PC-3 (cell line): ENCODE measurements at regions of chr1 and their contacts with region 1.

Region 1: DNA sequence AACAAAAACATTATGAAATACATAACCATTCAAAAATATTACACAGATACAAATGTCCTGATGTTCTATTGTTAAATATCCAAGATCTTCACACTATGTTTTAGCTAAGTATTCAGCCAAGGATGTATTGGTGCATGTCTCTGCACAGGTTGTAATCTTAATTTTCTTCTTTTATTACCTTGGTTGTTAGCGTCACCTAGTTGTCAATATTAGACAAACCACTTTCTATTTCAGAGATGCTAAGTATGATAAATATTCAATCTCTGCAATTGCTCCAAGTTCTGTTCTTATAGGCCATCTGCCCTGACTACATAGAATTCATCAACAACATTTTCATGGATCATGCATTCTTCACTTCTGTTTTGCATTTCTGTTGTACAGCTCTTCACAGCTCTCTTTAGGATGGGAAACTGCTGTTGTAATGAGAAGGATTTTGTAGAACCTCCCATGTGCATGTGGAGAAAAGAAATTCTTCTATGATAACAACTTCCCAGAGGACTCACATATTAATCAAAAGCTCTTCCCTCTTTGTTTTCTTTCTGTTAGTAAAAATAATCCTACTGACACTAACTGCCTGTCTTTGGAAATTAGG is 380.1 kb downstream of the NUF2 start:
- DNase-seq: peak; percentile 29
- ATAC-seq: no peak
- H3K4me3 ChIP-seq: no peak overlapping the region
- H3K27ac ChIP-seq: no peak overlapping the region
- H3K4me1 ChIP-seq: peaks cover 12% of the 10 kb centered on the region; the same call in 1 of the 2 replicates
- H3K27me3 ChIP-seq: no peaks in the 10 kb centered on the region
- CTCF ChIP-seq: peak; percentile 48

Region 2: DNA sequence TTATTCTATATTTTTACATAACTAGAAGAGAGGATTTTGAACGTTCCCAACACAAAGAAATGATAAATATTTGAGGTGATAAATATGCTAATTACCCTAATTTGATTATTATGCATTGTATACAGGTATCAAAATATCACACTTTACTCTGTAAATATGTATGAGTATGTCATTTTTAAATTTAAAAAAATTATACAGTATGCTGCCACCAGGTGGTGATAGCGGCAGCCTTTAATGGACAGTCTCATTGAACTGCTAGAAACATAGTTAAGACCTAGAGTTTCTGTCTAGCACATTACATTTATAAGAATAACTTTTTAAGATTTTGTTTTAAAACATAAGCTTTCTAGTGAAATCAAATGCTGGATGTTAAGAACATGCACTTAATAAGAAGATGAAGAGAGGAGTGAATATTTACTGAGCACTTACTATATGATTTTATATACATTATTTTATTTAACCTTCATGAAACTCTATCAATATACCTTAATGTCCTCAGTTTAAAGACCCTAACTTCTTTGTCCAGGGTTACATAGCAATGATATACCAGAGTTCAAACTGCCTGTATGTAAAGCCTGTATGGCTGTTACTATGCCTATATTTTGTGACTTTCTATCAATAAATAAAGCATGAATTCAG is 173.1 kb before region 1 on chr1:
- CTCF ChIA-PET with region 1: no interaction called
- POLR2A ChIA-PET with region 1: no interaction called
- intact Hi-C with region 1: loop called (anchors 2 kb)
- DNase-seq: peak; percentile 67
- ATAC-seq: peak; percentile 70
- H3K4me3 ChIP-seq: no peak overlapping the region
- H3K27ac ChIP-seq: no peak overlapping the region
- H3K4me1 ChIP-seq: no peaks in the 10 kb centered on the region
- H3K27me3 ChIP-seq: peaks cover 27% of the 10 kb centered on the region
- CTCF ChIP-seq: peak; percentile 72

Region 3: DNA sequence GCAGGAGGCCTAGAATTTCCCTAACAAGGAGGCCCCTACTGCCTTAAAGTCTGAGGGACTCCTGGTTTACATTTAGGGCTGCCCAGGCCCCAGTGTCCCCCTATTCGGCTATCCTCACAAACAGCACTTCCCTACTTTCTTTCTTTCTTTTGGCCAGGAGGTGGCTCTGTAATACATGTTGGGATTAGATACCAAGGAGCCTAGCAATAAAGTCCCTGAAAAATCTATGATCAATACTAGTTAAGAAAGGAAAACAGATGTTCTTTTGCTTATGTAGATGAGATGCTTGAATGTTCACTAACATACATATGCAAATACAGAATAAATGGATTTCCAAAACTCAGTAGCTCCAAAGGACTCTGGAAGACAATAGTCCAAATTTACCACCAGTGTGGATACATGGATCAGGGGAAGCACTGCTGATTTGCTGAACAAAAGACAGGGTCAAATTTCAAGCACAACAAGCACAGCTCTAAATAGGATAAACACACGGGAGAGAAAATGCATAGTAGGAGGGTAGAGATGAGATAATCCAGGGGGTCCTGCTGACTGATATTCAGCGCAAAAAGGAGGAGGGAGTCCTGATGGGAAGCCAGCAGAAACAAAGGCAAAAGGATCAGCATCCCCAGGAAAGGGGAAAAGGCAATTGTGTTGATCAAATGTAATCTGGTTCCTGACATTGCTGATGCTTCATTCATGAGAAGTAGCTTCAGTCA is 140.1 kb before region 1 on chr1:
- CTCF ChIA-PET with region 1: interaction called, 4 read pairs
- POLR2A ChIA-PET with region 1: no interaction called
- intact Hi-C with region 1: loop called (anchors 1 kb)
- DNase-seq: peak; percentile 40
- ATAC-seq: peak; percentile 50; the same call in 1 of the 2 replicates
- H3K4me3 ChIP-seq: no peak overlapping the region
- H3K27ac ChIP-seq: no peak overlapping the region
- H3K4me1 ChIP-seq: no peaks in the 10 kb centered on the region
- H3K27me3 ChIP-seq: no peaks in the 10 kb centered on the region
- CTCF ChIP-seq: peak; percentile 74

Region 4: DNA sequence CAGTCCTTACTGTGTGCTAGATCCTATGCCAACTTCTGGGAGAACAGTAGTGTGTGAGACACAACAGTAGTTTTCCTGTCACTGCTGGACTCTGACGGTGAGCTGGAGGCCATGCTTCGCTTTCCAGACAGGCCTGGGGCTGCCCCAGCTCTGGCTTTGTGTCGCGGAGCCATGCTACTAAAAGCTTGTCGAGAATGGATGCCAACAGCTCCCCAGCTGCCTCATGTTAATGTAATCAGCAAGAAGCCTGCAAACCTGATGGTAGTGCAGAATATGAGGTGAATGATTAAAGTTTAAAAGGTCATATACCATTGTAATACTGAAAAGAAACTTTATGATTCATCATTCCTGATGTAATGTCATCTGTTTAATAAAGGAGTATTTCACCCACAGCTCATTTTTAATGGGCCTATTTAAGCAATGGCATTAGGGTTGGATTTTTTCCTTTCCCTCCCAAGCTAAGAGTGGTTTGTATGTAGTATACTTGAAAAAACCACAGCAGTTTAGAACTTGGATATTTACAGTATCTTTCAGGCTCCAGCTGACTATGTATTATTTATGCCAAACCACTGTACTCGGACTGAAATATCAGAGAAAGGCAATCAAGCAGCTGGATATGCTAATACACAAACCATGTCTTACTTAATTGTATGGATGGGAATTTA is 37.1 kb before region 1 on chr1:
- CTCF ChIA-PET with region 1: no interaction called
- POLR2A ChIA-PET with region 1: no interaction called
- intact Hi-C with region 1: no loop called
- DNase-seq: no peak
- ATAC-seq: peak; percentile 37
- H3K4me3 ChIP-seq: no peak overlapping the region
- H3K27ac ChIP-seq: no peak overlapping the region
- H3K4me1 ChIP-seq: no peaks in the 10 kb centered on the region
- H3K27me3 ChIP-seq: no peaks in the 10 kb centered on the region
- CTCF ChIP-seq: no peak

Region 5: DNA sequence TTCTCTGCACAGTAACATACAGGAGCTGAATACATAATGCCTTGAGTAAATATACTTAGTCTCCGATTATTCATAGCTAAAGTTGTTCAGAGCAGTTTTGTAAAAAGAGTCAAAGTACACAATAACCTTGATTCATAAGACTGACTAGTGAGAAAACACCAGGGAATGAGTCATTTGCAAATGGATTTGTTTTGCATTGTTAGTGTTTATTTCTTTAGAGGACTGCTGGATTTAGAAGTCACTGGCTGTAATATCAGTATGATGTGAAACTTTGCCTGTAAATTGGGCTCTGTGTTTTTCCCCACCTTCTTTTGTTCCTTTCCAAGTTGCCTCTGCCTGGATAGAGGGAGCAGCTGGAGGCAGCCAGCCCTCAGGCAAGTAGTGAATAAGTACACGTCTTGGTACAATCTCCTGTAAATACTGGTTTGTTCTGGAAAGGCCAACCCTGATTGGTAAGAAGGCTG is 94.5 kb after region 1 on chr1:
- CTCF ChIA-PET with region 1: no interaction called
- POLR2A ChIA-PET with region 1: no interaction called
- intact Hi-C with region 1: loop called (anchors 1 kb)
- DNase-seq: peak; percentile 84
- ATAC-seq: peak; percentile 98
- H3K4me3 ChIP-seq: no peak overlapping the region
- H3K27ac ChIP-seq: peak overlapping the region; percentile 48
- H3K4me1 ChIP-seq: peaks cover 16% of the 10 kb centered on the region
- H3K27me3 ChIP-seq: no peaks in the 10 kb centered on the region
- CTCF ChIP-seq: no peak

Region 6: DNA sequence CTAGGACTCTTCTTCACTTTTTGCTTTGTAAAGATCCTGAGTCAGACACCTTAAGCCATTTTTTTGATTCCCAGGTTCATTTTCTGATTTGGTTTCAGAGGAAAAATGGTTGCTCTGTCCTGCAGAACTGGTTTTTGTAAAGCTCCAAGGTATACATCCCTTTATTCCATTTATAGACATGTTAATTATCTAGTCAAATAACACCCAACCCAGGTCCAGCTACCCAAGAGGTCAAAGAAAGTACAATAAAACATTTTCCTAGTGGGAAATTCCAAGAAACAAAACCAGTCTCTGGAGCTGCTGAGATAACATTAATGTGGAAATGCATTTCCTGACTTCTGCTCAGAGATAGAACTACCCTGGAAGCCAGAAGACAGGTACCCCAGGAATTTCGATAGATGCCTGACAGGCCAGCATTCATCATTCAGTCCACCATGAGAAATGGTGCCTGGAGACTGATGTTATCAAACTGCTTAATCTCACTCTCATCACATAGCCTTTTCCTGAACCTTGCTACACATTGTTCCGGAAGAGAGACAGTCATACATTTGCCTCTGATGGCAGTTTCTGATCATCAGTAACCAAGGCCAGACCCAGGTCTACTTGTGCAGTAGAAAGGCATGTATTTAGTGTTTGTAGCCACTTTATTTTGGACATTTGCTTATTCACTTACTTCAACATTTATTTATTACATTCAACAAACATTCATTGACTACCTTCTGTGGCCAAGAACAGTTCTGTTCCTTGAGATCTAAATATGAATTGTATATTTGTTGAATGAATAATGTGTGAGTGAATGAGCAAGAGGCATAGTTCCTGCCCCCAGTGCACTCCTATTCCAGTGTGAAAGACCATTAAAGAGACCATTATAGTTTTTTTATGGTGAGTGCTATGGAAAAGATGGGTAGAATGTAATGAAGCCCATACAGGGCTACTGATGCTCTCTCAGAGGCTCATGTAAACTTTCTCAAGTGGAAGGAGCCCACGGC is 105.5 kb after region 1 on chr1:
- CTCF ChIA-PET with region 1: no interaction called
- POLR2A ChIA-PET with region 1: no interaction called
- intact Hi-C with region 1: no loop called
- DNase-seq: no peak
- ATAC-seq: no peak
- H3K4me3 ChIP-seq: no peak overlapping the region
- H3K27ac ChIP-seq: no peak overlapping the region
- H3K4me1 ChIP-seq: no peaks in the 10 kb centered on the region
- H3K27me3 ChIP-seq: no peaks in the 10 kb centered on the region
- CTCF ChIP-seq: no peak